Heart left ventricle (tissue), 16 donors: ENCODE measurements at regions of chr20 and their contacts with region 1.

Region 1: DNA sequence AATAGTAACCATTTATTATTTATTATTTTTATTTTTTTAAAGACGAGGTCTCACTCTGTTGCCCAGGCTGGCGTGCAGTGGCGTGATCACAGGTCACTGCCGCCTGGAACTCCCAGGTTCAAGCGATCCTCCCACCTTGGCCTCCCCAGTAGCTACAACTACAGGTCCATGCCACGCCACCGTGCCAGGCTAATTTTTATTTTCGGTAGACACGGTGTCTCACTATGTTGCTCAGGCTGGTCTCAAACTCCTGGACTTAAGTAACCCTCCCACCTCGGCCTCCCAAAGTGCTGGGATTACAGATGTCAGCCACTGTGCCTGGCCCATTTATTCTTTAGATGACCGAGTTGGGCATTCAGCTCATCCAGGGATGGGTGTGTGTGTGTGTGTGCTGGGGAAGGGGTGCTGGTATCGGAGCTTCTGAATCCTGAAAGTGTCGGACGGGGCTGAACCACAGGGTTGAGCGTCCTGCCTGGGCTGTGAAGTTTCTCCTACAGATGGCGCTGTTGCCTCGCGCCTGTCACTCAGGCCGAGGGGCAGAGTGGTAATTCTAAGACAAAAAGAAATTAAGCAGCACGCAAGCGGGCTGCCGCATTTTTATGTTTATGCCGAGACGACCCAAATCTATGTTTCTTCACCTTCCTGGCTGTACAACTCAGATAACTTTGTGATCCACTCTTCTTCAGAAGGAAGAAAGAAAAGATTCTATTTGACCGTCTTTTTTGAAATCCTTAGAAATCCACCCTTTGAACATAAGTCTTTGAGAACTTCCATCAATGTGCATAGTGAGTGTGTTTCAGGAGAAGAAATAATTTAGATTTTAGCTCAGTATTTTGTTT is 252.8 kb downstream of the CDH26 start:
- DNase-seq: peak; percentile 46 to 80 (median 64)
- ATAC-seq: peak; percentile 78 to 87 (median 81)
- H3K4me3 ChIP-seq: no peak overlapping the region
- H3K27ac ChIP-seq: no peak overlapping the region
- H3K4me1 ChIP-seq: peaks cover 0 to 15% (median 0%) of the 10 kb centered on the region in 12 donors
- H3K27me3 ChIP-seq: peaks cover 0 to 3% (median 0%) of the 10 kb centered on the region in 9 donors
- CTCF ChIP-seq: peak; percentile 79 to 90 (median 87)
- POLR2A ChIP-seq: no peak

Region 2: GRCh38 chr20:59718751-59719150 is 492.2 kb before region 1 on chr20:
- intact Hi-C with region 1: no loop called
- DNase-seq: no peak
- ATAC-seq: no peak
- H3K4me3 ChIP-seq: no peak overlapping the region
- H3K27ac ChIP-seq: no peak overlapping the region
- H3K4me1 ChIP-seq: peaks cover 0 to 16% (median 0%) of the 10 kb centered on the region in 12 donors
- H3K27me3 ChIP-seq: peaks cover 0 to 51% (median 3%) of the 10 kb centered on the region in 9 donors
- CTCF ChIP-seq: no peak
- POLR2A ChIP-seq: no peak

Region 3: DNA sequence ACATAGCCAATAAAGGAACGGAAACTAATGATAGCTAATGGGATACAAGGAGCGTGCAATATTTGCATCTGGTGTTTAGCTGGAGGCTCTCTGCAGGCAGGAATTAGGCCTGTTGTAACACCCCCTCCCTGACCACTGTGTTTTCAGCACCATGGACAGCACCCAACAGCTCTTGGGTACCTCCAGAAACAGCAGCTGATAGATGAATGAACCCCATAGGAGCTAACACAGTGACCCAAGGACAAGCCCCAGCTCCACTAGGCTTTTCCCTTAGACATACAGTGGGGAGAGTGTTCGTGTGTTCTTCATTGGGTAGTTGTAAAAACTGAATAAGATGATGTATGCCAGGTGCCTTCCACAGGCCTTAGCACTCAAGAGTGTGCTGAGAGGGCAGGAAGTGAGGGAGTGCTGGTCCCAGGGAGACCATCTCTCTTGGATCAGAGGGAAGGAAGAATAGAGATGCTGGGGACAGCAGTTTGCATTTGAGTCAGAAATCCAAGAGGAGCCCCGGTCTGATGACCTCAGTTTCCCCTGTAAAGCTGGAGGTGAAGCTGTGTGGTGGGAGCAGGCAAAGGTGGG is 445.3 kb before region 1 on chr20:
- intact Hi-C with region 1: no loop called
- DNase-seq: no peak
- ATAC-seq: no peak
- H3K4me3 ChIP-seq: no peak overlapping the region
- H3K27ac ChIP-seq: no peak overlapping the region
- H3K4me1 ChIP-seq: no peaks in the 10 kb centered on the region
- H3K27me3 ChIP-seq: no peaks in the 10 kb centered on the region
- CTCF ChIP-seq: no peak
- POLR2A ChIP-seq: no peak

Region 4: DNA sequence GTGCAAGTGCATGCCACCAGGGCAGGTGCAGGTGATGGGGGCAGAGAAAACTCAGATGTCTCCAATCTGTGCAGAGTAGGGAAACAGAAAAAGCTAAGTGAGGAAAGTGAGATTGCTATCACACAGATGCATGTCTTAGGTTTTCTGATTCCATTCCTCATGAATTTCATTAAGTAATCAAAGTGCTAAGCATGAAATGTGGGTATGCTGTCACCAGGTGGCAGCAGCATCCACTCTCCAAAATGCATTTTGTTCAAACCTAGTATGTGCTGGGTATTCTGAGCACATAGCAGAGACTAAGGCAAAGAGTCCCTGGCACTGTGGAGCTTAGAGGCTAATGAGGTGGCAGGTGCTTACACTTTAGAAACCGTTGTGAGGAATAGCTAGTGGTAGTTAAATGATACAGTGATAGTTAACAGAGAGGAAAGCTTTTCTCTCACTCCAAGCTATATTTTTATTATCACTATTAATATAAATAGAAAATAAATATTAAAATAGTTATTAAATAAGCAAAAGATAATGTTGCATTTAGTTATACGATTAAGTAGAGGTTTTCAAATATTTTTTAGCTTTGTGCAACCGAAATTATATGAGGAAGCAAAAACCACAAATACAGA is 73.3 kb before region 1 on chr20:
- intact Hi-C with region 1: loop called in 3 of 10 experiments (anchors 5 kb)
- DNase-seq: no peak
- ATAC-seq: peak in 3 of 4 donors; percentile 31 to 55 (median 45)
- H3K4me3 ChIP-seq: peak overlapping the region in 10 of 12 donors; percentile 11 to 55 (median 38)
- H3K27ac ChIP-seq: peak overlapping the region in 5 of 12 donors; percentile 27 to 67 (median 47)
- H3K4me1 ChIP-seq: peaks cover 0 to 43% (median 14%) of the 10 kb centered on the region in 12 donors
- H3K27me3 ChIP-seq: no peaks in the 10 kb centered on the region
- CTCF ChIP-seq: peak in 11 of 12 donors; percentile 21 to 59 (median 46)
- POLR2A ChIP-seq: no peak

Region 5: GRCh38 chr20:61120595-61121515 is 909.9 kb after region 1 on chr20:
- intact Hi-C with region 1: loop called in 8 of 10 experiments (anchors 2 to 10 kb)
- DNase-seq: peak in 2 of 5 donors; percentile 46 to 52
- ATAC-seq: peak in 3 of 4 donors; percentile 44 to 64 (median 61)
- H3K4me3 ChIP-seq: no peak overlapping the region
- H3K27ac ChIP-seq: no peak overlapping the region
- H3K4me1 ChIP-seq: peaks cover 0 to 3% (median 0%) of the 10 kb centered on the region in 12 donors
- H3K27me3 ChIP-seq: peaks cover 0 to 3% (median 0%) of the 10 kb centered on the region in 9 donors
- CTCF ChIP-seq: peak; percentile 21 to 60 (median 45)
- POLR2A ChIP-seq: no peak

Region 6: DNA sequence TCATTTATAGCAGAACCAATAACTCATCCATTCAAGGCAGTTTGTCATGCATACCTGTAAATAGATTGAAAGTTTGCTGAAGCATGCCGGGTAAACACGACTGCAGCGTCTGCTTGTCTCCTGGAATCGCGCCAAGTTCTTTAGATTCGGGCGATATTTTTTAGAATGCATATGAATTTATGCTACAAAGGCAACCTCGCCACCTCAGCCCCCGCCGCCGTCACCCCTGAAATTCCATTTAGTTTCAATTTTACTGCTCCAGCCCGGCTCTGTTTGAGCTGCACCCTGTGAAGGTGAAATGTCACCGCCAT is 1023.8 kb after region 1 on chr20:
- intact Hi-C with region 1: loop called in 3 of 10 experiments (anchors 2 to 5 kb)
- DNase-seq: no peak
- ATAC-seq: no peak
- H3K4me3 ChIP-seq: no peak overlapping the region
- H3K27ac ChIP-seq: no peak overlapping the region
- H3K4me1 ChIP-seq: peaks cover 0 to 6% (median 0%) of the 10 kb centered on the region in 12 donors
- H3K27me3 ChIP-seq: peaks cover 0 to 16% (median 0%) of the 10 kb centered on the region in 9 donors
- CTCF ChIP-seq: no peak
- POLR2A ChIP-seq: no peak

Region 7: GRCh38 chr20:61263084-61263695 is 1052.2 kb after region 1 on chr20:
- intact Hi-C with region 1: loop called in 2 of 10 experiments (anchors 10 kb)
- DNase-seq: no peak
- ATAC-seq: no peak
- H3K4me3 ChIP-seq: no peak overlapping the region
- H3K27ac ChIP-seq: no peak overlapping the region
- H3K4me1 ChIP-seq: no peaks in the 10 kb centered on the region
- H3K27me3 ChIP-seq: peaks cover 0 to 61% (median 0%) of the 10 kb centered on the region in 9 donors
- CTCF ChIP-seq: peak; percentile 43 to 75 (median 66)
- POLR2A ChIP-seq: no peak

Region 8: DNA sequence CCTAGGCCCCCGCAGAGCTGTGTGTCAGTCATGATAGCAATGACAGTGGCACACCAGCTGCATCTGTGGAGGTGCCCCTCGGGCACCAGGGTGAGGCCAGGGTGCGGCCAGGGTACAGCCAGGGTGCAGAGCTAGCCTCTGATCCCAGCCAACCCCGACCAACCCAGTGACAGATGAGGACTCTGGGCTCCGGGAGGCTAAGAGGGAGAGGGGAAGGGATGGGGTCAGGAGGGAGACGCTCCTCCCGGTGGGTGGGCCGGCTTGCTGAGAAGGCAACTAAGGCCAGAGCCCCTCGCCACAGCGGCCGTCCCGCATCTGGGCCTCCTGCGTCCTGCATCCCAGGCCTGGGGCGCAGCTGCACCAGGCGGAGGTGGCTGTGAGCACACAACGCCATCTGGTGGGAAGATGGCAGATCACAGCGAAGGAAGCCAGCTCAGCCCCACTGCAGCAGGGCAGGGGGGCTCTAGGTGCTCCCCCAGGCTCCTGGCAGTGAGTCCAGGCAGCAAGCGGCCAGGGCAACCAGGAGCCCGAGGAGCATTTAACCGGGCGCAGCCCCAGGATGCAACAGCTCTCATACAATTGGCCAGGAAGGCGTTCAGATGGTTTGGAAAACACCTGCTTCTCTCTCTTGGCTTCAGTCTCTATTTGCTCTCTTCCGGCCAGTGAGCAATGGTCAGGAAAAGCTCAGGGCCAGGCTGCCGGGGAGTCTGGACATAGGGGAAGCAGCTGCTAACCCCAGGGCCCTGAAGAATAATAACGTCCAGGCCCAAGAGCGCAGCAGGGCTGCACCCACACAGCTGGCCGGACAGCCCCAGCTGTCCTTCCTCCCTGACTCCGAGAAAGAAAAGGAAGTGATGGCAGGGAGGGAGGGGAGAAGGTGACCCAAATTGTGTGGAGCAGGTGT is 1685.3 kb after region 1 on chr20:
- intact Hi-C with region 1: loop called in 4 of 10 experiments (anchors 5 to 10 kb)
- DNase-seq: peak in 1 of 5 donors; percentile 67
- ATAC-seq: peak in 3 of 4 donors; percentile 42 to 69 (median 60)
- H3K4me3 ChIP-seq: no peak overlapping the region
- H3K27ac ChIP-seq: no peak overlapping the region
- H3K4me1 ChIP-seq: no peaks in the 10 kb centered on the region
- H3K27me3 ChIP-seq: peaks cover 0 to 27% (median 0%) of the 10 kb centered on the region in 9 donors
- CTCF ChIP-seq: peak; percentile 52 to 73 (median 62)
- POLR2A ChIP-seq: no peak